A673 (cell line): ENCODE measurements at regions of chr6 and their contacts with region 1.

Region 1: DNA sequence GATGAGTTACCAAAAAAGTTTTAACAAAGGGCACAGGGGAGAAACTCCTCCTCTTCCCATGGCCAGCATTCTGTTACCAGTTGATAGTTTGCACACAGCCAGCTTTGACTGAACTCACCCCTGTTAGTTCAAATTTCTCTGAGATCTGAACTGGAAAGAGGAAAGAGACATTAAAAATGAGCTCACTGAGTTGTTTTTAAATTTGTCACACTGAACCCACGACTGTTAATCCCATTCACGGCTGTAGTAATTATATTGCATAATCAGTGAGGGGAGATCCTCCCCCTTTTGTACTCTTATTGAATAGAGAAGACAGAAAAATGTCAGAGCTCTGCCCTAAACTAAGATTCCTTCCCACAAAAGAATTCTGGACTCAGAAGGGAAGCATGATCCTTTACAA is 17.5 kb upstream of the DSP start:
- DNase-seq: peak; percentile 80
- H3K4me3 ChIP-seq: no peak overlapping the region
- H3K27ac ChIP-seq: no peak overlapping the region
- H3K4me1 ChIP-seq: peaks cover 22% of the 10 kb centered on the region
- H3K27me3 ChIP-seq: no peaks in the 10 kb centered on the region
- CTCF ChIP-seq: no peak

Region 2: DNA sequence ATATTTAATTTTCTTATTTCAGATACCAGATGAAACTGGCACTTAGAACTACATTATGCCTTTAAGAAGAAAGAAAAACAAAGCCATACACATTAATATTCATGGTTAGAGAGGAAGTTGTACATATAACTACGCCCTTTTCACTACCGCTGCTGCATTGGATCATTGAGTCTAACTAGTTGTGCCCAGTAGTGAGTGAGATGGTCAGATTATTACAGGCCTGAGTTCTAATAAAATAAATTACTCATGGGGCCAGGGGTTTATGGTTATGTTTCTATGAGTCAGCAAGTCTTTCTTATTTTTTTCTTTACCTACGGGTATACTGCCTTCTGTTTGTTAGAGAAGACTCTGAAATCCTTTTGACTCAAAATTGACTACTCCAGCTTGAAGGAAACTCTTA is 122.8 kb before region 1 on chr6:
- CTCF ChIA-PET with region 1: no interaction called
- POLR2A ChIA-PET with region 1: no interaction called
- intact Hi-C with region 1: no loop called
- DNase-seq: peak; percentile 10
- H3K4me3 ChIP-seq: no peak overlapping the region
- H3K27ac ChIP-seq: no peak overlapping the region
- H3K4me1 ChIP-seq: peaks cover 8% of the 10 kb centered on the region
- H3K27me3 ChIP-seq: no peaks in the 10 kb centered on the region
- CTCF ChIP-seq: no peak

Region 3: DNA sequence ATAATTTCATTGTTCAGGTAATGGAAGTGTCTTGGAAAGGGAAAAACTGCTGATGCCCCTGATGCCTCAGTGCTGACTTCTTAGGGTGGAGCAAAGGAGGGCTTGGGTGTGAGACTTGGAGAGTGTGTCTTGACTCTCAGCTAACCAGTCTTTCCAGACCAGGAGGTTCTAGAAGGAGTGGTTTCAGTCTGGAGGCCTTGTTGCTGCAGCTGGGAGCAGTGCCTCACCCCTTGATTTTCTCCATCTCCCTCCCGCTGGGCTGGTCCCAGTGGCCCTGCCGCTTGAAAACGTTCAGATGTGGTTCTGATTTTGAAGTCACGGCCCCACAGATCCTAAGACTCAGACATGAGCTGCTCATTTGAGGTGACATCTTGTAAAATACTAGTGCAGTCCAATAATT is 23.0 kb after region 1 on chr6:
- CTCF ChIA-PET with region 1: no interaction called
- POLR2A ChIA-PET with region 1: interaction called, 20 read pairs
- intact Hi-C with region 1: no loop called
- DNase-seq: no peak
- H3K4me3 ChIP-seq: no peak overlapping the region
- H3K27ac ChIP-seq: no peak overlapping the region
- H3K4me1 ChIP-seq: peaks cover 8% of the 10 kb centered on the region
- H3K27me3 ChIP-seq: peaks cover 56% of the 10 kb centered on the region
- CTCF ChIP-seq: no peak